ENCODE measurements at regions of chr1 and their contacts with region 1.

Region 1: GRCh38 chr1:169348383-169349036 is 19.1 kb downstream of the NME7 start:
- DNase-seq: no peak
- ATAC-seq: peak; percentile 44 to 77 (median 59)
- H3K4me3 ChIP-seq: no peak overlapping the region
- H3K27ac ChIP-seq: no peak overlapping the region
- H3K4me1 ChIP-seq: no peaks in the 10 kb centered on the region
- H3K27me3 ChIP-seq: no peaks in the 10 kb centered on the region
- CTCF ChIP-seq: peak; percentile 86

Region 2: DNA sequence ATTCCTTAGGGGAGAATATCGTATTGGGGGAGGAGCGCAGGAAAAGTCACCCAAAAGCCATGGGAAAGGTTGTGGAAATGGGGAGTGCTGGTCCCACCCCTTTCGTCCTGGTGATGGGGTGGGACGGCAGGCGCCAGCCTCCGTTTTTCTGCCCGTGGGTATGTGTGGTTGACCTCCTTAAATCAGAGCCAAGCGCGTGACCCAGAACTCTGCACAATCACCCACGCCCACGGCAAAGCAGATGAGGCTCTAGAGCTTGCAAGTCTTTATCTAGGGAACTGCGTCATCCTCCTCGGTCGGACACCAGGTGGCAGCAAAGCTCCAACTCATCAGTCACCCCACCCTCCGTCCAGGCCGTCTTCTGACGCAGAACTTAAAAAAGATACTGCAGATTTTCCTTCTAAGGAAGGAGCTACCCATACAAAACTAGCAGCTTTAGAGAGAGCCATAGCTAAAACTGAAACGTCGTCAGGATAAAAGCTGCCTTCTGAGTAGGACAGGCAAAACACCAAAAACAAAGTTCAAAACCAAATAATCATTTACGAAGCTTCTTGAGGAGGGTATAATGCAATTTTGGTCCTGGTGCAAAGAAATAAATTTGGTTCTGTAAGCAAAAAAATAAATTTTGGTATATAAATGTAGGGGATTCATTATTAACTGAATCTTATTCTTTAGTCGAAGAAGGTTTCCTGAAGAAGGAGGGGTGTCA is 1005.8 kb before region 1 on chr1:
- intact Hi-C with region 1: loop called (anchors 5 to 10 kb)
- DNase-seq: peak; percentile 87 to 90
- ATAC-seq: peak; percentile 96 to 100 (median 98)
- H3K4me3 ChIP-seq: peak overlapping the region; percentile 41
- H3K27ac ChIP-seq: no peak overlapping the region
- H3K4me1 ChIP-seq: peaks cover 5% of the 10 kb centered on the region
- H3K27me3 ChIP-seq: no peaks in the 10 kb centered on the region
- CTCF ChIP-seq: peak; percentile 85

Region 3: DNA sequence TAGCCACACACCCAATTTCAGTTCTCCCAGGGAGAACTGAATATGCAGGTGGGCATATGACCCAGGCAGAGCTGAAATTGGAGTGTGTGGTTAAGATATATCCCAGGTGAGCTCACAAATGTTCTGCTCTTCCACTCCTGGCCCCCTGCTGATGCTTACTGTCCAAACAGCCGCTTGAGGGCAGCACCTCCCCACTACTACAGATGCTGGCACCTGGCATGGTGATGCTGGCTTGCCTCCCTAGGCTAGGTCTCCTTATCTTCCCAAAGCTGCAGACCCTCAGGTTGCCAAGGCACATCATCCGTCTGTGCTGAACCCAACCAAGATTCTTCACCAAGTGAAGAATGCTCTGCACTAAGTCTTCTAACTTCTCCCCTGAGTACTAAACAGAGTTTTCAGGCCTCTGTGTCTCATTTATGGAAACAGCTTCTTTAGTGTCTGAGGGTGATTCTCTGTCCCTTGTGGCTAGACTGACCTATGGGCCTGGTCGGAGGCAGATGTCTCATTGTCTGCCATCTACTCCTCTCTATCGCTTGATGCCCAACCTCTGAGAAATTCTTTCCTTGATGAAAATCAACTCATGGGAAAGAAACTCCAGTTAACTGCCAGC is 744.9 kb before region 1 on chr1:
- intact Hi-C with region 1: loop called (anchors 2 to 5 kb)
- DNase-seq: peak; percentile 75 to 87
- ATAC-seq: peak; percentile 66 to 77 (median 72)
- H3K4me3 ChIP-seq: no peak overlapping the region
- H3K27ac ChIP-seq: peak overlapping the region; percentile 0
- H3K4me1 ChIP-seq: peaks cover 33% of the 10 kb centered on the region
- H3K27me3 ChIP-seq: no peaks in the 10 kb centered on the region
- CTCF ChIP-seq: peak; percentile 85

Region 4: DNA sequence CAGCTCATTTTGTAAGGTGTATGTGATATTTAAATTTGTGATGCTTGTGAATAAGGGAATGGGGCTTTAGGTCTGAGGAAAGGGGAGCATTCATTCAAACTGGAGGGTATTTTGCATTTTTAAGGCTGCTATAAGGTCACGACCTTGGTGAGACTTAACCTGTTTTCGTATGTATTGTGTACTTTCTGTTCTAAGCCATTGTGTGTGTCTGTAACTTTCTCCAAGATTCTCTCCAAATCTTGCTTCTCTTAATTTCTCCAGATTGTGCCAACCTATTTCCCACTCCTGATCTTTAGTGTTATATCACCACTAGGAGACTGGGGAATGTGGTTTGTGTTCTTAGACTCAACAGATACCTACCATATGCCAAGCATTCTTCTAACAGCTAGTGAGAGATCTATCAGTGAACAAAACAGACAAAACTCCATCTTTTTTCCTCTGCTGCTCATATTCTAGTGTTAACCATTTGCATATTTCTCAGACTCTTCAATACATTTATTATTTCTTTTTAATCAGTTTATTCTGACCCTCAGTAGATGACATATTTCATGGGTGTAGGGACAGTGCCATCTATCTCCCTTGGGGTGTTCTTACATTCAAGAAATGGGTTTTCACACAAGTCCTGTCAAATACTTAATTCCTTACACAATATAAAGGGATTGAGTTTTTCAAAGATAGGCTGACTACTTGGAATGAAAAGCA is 214.6 kb before region 1 on chr1:
- intact Hi-C with region 1: loop called in 1 of 2 experiments (anchors 10 kb)
- DNase-seq: no peak
- ATAC-seq: peak in 3 of 4 donors; percentile 10 to 20 (median 13)
- H3K4me3 ChIP-seq: no peak overlapping the region
- H3K27ac ChIP-seq: peak overlapping the region; percentile 51
- H3K4me1 ChIP-seq: peaks cover 12% of the 10 kb centered on the region
- H3K27me3 ChIP-seq: no peaks in the 10 kb centered on the region
- CTCF ChIP-seq: peak; percentile 21

Region 5: DNA sequence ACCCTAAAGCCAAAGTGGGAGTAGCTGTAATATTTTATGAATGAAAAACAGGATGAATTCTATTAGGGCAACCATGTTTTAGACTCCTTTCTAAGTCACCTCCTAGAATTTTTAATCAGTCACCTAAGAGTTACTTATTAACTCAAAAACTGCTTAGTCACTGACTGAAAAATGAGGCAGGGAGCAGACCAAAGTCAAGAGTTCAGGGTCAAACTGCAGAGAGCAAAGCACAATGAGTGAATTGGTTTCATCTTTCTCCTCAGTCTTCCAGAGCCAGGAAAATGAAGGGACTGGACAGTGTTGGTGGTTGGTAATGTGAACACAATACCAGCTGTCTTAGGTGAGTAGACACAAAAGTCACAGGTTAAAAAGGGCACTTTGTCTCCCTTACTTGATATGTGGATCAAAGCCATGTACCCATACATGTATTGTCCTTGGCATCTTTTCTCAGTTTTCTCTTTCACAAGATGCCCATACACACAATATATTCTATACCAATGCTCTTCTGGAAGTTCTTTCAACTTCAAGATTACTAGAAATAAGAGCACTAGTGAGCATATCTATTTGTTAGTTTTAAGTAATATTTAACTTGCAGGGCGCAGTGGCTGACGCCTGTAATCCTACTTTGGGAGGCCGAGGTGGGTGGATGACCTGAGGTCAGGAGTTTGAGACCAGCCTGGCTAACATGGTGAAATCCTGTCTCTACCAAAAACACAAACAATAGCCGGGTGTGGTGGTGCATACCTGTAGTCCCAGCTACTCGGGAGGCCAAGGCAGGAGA is 199.8 kb before region 1 on chr1:
- intact Hi-C with region 1: loop called in 1 of 2 experiments (anchors 10 kb)
- DNase-seq: no peak
- ATAC-seq: peak; percentile 43 to 82 (median 68)
- H3K4me3 ChIP-seq: no peak overlapping the region
- H3K27ac ChIP-seq: peak overlapping the region; percentile 52
- H3K4me1 ChIP-seq: peaks cover 20% of the 10 kb centered on the region
- H3K27me3 ChIP-seq: no peaks in the 10 kb centered on the region
- CTCF ChIP-seq: no peak

Region 6: DNA sequence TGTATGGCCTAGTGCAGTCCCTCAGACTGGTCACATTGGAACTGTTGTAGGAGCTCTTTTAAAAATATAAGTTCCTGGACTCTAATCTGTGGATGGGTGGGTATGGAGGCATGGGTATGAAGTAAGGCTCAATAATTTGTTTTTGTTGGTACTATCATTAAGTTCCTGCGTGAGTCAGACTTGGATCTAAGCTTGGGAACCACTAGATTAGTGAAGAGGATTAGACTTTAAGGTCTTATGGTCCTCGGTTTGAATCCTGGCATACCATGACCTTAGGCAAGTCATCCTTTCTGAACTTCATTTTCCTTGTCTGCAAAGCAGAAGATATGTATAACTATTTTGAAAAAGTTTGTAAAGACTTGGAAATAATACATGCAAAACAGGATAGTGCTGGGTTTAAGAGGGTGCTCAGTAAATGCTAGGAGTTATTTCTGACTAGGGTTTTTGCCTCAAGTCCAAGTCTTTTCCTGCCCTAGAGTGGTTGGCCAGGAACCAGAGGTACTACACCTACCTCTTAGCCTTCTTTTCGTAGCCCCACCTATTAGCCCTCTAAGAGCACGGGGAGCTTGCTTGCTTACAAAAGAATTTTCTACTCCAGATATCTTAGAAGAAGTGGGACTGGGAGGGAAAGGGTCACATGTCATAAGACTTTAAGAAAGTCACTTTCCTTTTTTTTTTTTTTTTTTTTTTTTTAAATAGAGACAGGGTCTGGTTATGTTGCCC is 484.8 kb after region 1 on chr1:
- intact Hi-C with region 1: no loop called
- DNase-seq: no peak
- ATAC-seq: no peak
- H3K4me3 ChIP-seq: no peak overlapping the region
- H3K27ac ChIP-seq: no peak overlapping the region
- H3K4me1 ChIP-seq: no peaks in the 10 kb centered on the region
- H3K27me3 ChIP-seq: no peaks in the 10 kb centered on the region
- CTCF ChIP-seq: no peak